ENCODE measurements at regions of chr14 and their contacts with region 1.

Region 1: GRCh38 chr14:79758985-79759384 is 452.3 kb downstream of the DIO2 start:
- DNase-seq: no peak
- H3K4me3 ChIP-seq: no peak overlapping the region
- CTCF ChIP-seq: no peak

Region 2: DNA sequence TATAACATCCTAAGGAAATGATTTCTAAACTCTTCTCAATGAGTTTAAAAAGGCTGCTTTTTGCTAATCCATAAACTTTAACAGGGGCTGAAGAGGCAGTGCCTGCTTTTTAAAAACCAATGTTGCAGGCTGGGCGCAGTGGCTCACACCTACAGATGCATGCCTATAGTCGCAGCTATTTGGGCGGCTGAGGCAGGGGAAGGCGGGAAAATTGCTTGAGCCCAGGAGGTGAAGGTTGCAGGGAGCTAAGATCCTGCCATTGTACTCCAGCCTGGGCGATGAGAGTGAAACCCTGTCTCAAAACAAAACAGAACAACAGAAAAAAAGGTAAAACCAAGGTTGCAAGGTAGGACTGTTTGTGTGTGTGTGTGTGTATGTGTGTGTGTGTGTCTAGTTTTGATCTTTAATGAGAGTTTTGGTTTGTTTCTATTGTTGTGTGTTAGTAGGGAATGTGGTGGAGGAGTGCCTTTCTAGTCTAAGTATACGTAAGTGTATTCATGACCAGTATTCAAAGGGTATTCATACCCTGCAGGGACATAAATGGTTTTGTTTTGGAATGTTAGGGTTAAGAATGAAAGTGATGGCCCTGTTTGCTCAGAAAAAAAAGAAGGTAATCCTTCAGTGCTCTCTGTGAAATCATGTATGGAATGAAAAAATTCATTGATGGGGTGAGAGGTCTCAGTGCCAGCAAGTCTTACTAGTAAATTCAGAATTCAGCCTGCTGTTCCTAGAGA is 78.7 kb before region 1 on chr14:
- in situ Hi-C with region 1: loop called (anchors 5 kb)
- DNase-seq: no peak
- H3K4me3 ChIP-seq: no peak overlapping the region
- CTCF ChIP-seq: no peak

Region 3: GRCh38 chr14:80003138-80003537 is 244.2 kb after region 1 on chr14:
- in situ Hi-C with region 1: no loop called
- DNase-seq: no peak
- H3K4me3 ChIP-seq: no peak overlapping the region
- CTCF ChIP-seq: no peak